Right ventricle myocardium inferior (tissue), 1 donor: ENCODE measurements at regions of chr1 and their contacts with region 1.

Region 1: GRCh38 chr1:180252638-180253536 is 22.8 kb downstream of the LHX4 start:
- DNase-seq: peak; percentile 90
- ATAC-seq: peak; percentile 51

Region 2: DNA sequence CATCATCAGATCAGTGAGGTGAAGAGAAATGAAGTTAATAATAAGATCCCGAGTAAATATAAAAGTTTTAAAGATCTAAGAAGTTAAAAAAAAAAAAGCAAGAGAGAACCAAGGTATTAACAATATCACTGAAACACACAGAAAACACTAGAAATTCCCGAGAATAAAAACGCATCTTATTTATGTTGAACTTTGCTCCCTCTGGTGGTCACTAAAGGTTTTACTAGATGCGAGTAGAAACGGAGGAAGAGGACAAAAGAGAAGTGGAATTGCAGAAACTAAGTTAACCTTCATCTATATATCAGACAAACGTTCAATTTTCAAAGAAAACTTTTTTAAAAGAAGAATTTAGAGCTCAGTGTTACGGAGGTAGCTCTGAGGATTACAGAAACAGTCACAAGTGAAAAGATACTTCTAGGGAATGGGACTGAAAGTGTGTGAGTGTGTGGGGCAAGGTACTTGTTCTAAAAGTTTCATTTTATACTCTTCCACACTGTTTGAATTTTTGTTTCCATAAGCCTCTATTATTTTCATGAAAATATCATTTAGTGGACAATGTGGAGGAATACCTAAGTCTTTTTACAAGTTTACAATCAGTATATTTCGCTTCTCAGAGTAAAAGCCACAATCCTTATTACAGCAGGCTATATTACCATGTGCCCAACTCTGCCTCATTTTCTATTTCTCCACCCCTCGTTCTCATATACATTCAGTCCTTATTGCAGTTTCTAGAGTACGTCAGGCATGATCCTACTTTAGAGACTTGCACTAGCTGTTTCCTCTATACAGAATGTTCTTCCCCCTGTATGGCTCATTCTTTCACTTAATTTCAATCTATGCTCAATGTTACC is 229.8 kb after region 1 on chr1:
- intact Hi-C with region 1: loop called (anchors 5 kb)
- DNase-seq: no peak
- ATAC-seq: no peak